ENCODE measurements at regions of chr4 and their contacts with region 1.

Region 1: DNA sequence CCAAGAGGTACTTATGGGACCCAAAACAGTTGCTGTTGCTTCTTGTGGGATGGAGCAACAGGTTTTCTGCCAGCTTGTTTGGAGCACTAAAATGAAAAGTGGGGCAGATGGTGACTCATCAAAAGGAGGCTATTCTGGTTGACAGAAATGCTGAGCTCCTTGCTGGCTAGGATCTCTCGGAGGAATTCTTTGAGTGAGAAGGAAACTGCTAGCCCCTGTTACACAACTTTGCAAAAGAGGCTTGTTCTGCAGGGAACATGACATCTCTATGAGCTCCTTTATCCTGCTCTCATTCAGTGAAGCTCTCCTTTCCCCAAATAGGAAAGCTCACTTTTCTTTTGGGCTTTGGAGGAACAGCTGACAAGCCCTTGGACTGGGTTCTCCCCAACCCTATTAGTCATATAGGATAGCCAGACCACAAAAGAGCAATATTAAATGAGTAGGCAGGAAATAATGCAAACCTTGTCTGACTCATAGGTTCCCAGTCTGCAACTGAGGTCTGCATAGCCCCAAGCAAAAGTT is 108.3 kb downstream of the CDS1 start:
- DNase-seq: peak; percentile 93
- ATAC-seq: peak; percentile 83
- H3K4me3 ChIP-seq: peak overlapping the region; percentile 62
- H3K27ac ChIP-seq: peak overlapping the region; percentile 99
- H3K4me1 ChIP-seq: peaks cover 38% of the 10 kb centered on the region
- H3K27me3 ChIP-seq: no peaks in the 10 kb centered on the region
- CTCF ChIP-seq: no peak

Region 2: GRCh38 chr4:84639145-84639544 is 52.1 kb before region 1 on chr4:
- CTCF ChIA-PET with region 1: no interaction called
- POLR2A ChIA-PET with region 1: no interaction called
- intact Hi-C with region 1: loop called (anchors 5 kb)
- DNase-seq: no peak
- ATAC-seq: peak; percentile 53
- H3K4me3 ChIP-seq: no peak overlapping the region
- H3K27ac ChIP-seq: no peak overlapping the region
- H3K4me1 ChIP-seq: peaks cover 19% of the 10 kb centered on the region
- H3K27me3 ChIP-seq: no peaks in the 10 kb centered on the region
- CTCF ChIP-seq: no peak

Region 3: GRCh38 chr4:84750253-84750959 is 59.2 kb after region 1 on chr4:
- CTCF ChIA-PET with region 1: no interaction called
- POLR2A ChIA-PET with region 1: no interaction called
- intact Hi-C with region 1: no loop called
- DNase-seq: peak; percentile 61
- ATAC-seq: 0 out of 2 replicates have a peak, but pooled peaks have one; percentile 29
- H3K4me3 ChIP-seq: no peak overlapping the region
- H3K27ac ChIP-seq: no peak overlapping the region
- H3K4me1 ChIP-seq: no peaks in the 10 kb centered on the region
- H3K27me3 ChIP-seq: no peaks in the 10 kb centered on the region
- CTCF ChIP-seq: peak; percentile 71